ENCODE measurements at regions of chr14 and their contacts with region 1.

Region 1: GRCh38 chr14:82510007-82510406 is 976.4 kb upstream of the SEL1L start:
- DNase-seq: no peak
- H3K4me3 ChIP-seq: no peak overlapping the region
- H3K27ac ChIP-seq: no peak overlapping the region
- H3K4me1 ChIP-seq: no peaks in the 10 kb centered on the region
- H3K27me3 ChIP-seq: no peaks in the 10 kb centered on the region
- CTCF ChIP-seq: no peak

Region 2: DNA sequence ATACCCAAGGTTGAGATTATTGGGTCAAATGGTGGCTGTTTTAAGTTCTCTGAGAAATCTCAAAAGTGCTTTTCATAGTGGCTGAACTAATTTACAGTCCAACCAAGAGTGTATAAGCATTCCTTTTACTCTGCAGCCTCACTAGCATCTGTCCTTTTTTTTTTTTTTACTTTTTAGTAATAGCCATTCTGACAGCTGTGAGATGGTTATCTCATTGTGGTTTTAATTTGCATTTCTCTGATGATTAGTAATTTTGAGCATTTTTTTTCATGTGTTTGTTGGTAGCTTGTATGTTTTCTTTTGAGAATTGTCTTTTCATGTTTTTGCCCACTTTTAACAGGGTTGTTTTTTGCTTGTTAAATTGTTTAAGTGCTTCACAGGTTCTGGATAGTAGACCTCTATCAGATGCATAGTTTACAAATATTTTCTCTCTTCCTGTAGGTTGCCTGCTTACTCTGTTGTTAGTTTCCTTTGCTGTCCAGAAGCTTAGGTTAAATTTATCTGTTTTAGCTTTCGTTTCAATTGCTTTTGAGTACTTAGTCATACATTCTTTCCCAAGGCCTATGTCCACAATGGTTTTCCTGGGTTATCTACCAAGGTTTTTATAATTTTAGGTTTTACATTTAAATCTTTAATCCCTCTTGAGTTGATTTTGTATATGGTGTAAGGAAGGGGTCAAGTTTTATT is 95.0 kb before region 1 on chr14:
- intact Hi-C with region 1: no loop called
- DNase-seq: no peak
- H3K4me3 ChIP-seq: no peak overlapping the region
- H3K27ac ChIP-seq: no peak overlapping the region
- H3K4me1 ChIP-seq: no peaks in the 10 kb centered on the region
- H3K27me3 ChIP-seq: no peaks in the 10 kb centered on the region
- CTCF ChIP-seq: no peak

Region 3: DNA sequence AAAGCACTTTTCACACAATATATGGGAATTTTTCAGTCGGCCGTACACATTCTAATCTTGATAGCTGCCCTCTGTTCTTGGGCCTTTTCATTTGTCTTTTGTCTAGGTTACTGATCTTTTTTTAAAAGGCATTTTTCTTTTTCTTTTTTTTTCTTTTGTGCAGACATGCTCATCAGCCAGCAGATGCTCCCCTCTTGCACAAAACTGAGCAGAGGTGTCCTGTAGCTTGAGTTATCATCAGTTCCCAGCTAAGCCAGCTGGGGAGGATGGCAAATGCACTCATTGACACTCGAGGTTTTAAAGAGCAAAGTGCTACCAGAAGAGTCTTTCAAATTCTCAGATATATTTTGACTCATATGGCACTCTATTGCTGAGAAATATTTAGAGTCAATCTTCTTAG is 62.4 kb before region 1 on chr14:
- intact Hi-C with region 1: no loop called
- DNase-seq: no peak
- H3K4me3 ChIP-seq: no peak overlapping the region
- H3K27ac ChIP-seq: no peak overlapping the region
- H3K4me1 ChIP-seq: no peaks in the 10 kb centered on the region
- H3K27me3 ChIP-seq: no peaks in the 10 kb centered on the region
- CTCF ChIP-seq: no peak

Region 4: DNA sequence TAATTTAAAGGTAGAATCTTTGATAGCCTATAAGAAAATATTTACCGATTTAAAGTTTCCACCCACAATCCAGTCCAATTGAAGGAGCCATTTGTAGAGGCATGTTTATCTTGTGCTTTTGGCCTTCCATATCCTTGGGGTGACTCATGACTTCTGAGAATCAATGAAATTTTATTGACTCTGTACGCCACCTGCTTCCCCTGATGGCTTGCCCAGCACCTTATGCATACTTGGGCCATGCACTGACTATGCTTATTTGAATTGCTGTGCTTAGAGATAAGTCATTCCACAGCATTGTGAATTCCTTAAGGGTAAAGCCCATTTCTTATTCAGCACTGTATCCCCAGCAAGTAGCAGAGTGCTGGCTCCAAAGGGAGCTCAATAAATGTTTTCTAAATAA is 21.5 kb before region 1 on chr14:
- intact Hi-C with region 1: no loop called
- DNase-seq: no peak
- H3K4me3 ChIP-seq: no peak overlapping the region
- H3K27ac ChIP-seq: no peak overlapping the region
- H3K4me1 ChIP-seq: no peaks in the 10 kb centered on the region
- H3K27me3 ChIP-seq: no peaks in the 10 kb centered on the region
- CTCF ChIP-seq: no peak

Region 5: DNA sequence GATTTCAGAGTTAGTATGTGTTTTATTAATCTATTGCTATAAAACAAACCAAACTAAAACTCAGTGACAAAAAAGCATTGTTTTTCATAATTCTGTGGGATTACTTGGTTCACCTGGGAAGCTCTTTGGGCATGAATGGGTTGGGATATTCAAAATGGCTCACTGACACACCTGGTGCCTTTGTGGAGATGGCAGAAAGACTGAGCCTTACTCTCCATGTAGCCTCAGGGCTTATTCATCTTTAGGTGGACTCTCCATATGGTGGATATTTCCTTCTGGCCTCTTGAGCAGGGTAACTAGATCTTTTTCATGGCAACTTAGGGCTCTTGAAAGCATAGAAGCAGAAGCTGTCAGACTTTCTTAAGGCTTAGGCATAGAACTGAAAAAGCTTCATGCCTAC is 126.4 kb after region 1 on chr14:
- intact Hi-C with region 1: loop called (anchors 10 kb)
- DNase-seq: no peak
- H3K4me3 ChIP-seq: no peak overlapping the region
- H3K27ac ChIP-seq: no peak overlapping the region
- H3K4me1 ChIP-seq: no peaks in the 10 kb centered on the region
- H3K27me3 ChIP-seq: no peaks in the 10 kb centered on the region
- CTCF ChIP-seq: no peak

Measured in tibial artery (tissue), 4 donors.